ENCODE measurements at regions of chr9 and their contacts with region 1.

Region 1: GRCh38 chr9:77456829-77457437 is 191.2 kb downstream of the GNA14 start:
- DNase-seq: peak; percentile 95
- H3K4me3 Mint-ChIP-seq: no peak overlapping the region
- H3K27ac Mint-ChIP-seq: no peak overlapping the region
- H3K4me1 Mint-ChIP-seq: peaks cover 25% of the 10 kb centered on the region
- H3K27me3 Mint-ChIP-seq: no peaks in the 10 kb centered on the region

Region 2: DNA sequence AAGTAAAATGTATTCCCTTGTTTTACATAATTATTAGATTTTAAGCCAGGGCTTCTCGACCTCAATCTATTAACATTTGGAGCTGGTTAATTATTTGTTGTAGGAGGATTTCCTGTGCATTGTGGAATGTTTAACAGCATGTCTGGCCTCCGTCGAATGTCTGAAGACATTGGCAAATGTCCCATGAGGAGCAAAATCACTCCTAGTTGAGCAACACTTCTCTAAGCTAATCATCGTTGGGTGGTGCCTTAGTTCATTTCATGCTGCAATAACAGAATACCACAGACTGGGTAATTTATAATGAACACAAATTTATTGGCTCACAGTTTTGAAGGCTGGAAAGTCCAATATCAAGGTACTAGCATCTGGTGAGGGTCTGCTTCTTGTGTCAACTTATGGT is 293.0 kb before region 1 on chr9:
- intact Hi-C with region 1: loop called (anchors 1 kb)
- DNase-seq: no peak
- H3K4me3 Mint-ChIP-seq: no peak overlapping the region
- H3K27ac Mint-ChIP-seq: no peak overlapping the region
- H3K4me1 Mint-ChIP-seq: no peaks in the 10 kb centered on the region
- H3K27me3 Mint-ChIP-seq: peaks cover 10% of the 10 kb centered on the region

Region 3: GRCh38 chr9:77433675-77434445 is 23.1 kb before region 1 on chr9:
- intact Hi-C with region 1: loop called (anchors 1 kb)
- DNase-seq: peak; percentile 82
- H3K4me3 Mint-ChIP-seq: no peak overlapping the region
- H3K27ac Mint-ChIP-seq: no peak overlapping the region
- H3K4me1 Mint-ChIP-seq: no peaks in the 10 kb centered on the region
- H3K27me3 Mint-ChIP-seq: peaks cover 2% of the 10 kb centered on the region

Region 4: DNA sequence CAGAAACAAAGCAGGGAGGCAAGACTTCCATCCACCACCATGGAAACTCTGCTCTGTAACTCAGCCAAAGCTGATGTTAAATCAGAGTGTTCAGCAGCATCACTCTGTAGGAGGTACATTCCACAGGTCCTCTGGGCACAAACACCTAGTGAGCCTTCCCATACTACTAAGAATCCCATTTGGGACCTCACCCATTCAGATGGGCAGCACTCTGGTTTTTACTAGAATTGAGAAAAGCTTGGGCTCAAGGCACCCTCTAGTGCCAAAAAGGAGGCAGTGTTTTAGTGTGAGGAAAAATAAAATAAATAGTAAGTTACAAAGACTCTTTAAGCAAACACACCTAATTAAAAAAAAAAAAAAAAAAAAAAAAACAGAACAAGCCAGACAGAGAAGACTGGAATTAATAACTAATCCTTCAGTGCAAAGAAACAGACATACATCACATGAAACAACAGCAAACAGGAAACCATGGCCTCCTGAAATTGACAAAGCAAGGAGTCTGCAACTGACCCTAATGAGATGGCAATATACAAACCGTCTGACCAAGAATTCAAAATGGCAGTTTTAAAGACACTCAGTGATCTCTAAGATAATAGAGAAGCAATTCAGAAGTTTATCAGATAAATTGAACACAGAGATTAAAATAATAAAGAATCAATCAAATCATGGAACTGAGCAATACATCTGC is 31.6 kb after region 1 on chr9:
- intact Hi-C with region 1: loop called (anchors 1 kb)
- DNase-seq: peak; percentile 61
- H3K4me3 Mint-ChIP-seq: peak overlapping the region; percentile 75
- H3K27ac Mint-ChIP-seq: no peak overlapping the region
- H3K4me1 Mint-ChIP-seq: peaks cover 13% of the 10 kb centered on the region
- H3K27me3 Mint-ChIP-seq: peaks cover 4% of the 10 kb centered on the region

Region 5: GRCh38 chr9:78296893-78297671 is 840.1 kb after region 1 on chr9 and contains the start of gene PSAT1:
- intact Hi-C with region 1: loop called (anchors 10 kb)
- DNase-seq: peak; percentile 98
- H3K4me3 Mint-ChIP-seq: peak within 1 kb of the TSS; percentile 96
- H3K27ac Mint-ChIP-seq: peak within 1 kb of the TSS; percentile 97
- H3K4me1 Mint-ChIP-seq: peaks cover 36% of the 10 kb centered on the region
- H3K27me3 Mint-ChIP-seq: no peaks in the 10 kb centered on the region
- total RNA-seq, gene PSAT1: 88.5 and 91.3 TPM in 2 replicates